ENCODE measurements at regions of chr17 and their contacts with region 1.

Region 1: DNA sequence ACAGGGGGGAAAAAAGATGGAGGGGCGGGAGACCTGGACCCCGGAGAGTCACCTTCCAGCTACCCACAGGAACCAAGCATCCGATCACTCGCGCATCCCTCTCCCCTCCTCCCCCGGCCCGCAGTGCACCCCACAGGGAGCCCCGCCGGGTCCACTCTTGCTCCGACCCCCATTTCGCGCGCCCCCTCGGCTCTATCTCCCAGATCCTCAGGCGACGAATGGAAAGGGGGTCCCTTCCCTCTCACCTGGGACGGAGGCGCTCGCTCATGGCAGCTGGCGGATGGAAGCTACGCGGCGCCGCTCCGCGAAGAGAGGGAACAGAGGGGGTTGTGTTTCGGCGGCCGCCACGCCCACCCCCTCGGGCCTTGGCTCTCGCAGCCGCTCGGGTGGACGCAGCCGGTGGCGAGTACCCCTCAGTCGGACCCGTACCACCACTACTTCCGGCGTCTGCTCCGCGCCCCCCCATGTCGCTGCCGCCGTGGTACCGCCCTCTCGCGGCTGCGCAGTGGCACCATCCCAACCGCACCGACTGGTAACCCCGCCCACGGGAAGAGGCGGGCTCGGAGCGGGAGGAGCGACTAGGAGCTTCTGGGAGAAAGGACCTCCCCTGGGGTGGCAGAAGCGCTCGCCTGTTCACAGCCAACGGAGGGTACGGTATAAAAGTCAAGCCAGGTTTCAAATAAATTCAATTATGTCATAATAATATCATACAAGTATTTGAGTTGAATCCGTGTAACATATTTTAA is 29.7 kb downstream of the CPSF4L start:
- DNase-seq: peak; percentile 96
- ATAC-seq: peak; percentile 85
- H3K4me3 ChIP-seq: peak overlapping the region; percentile 95
- H3K27ac ChIP-seq: peak overlapping the region; percentile 89
- H3K4me1 ChIP-seq: peaks cover 19 to 31% of the 10 kb centered on the region in 2 experiments
- H3K27me3 ChIP-seq: no peaks in the 10 kb centered on the region
- CTCF ChIP-seq: peak; percentile 22 to 36 (median 32); a peak in 3 of 6 replicates
- EP300 ChIP-seq: no peak
- POLR2A ChIP-seq: peak; percentile 79
- RAD21 ChIP-seq: no peak; a peak in 1 of 4 replicates

Region 2: GRCh38 chr17:73210002-73210678 is 21.9 kb before region 1 on chr17:
- CTCF ChIA-PET with region 1: no interaction called
- POLR2A ChIA-PET with region 1: interaction called, 10 read pairs
- in situ Hi-C with region 1: no loop called
- intact Hi-C with region 1: no loop called
- DNase-seq: peak; percentile 58 to 81 (median 71)
- ATAC-seq: peak; percentile 88
- H3K4me3 ChIP-seq: no peak overlapping the region
- H3K27ac ChIP-seq: peak overlapping the region; percentile 51; the same call in 2 of the 3 replicates
- H3K4me1 ChIP-seq: peaks cover 9 to 11% of the 10 kb centered on the region in 2 experiments; a peak in 4 of 5 replicates
- H3K27me3 ChIP-seq: no peaks in the 10 kb centered on the region
- CTCF ChIP-seq: peak; percentile 39 to 64 (median 57); a peak in 5 of 6 replicates
- EP300 ChIP-seq: no peak
- POLR2A ChIP-seq: no peak
- RAD21 ChIP-seq: no peak; a peak in 1 of 4 replicates

Region 3: GRCh38 chr17:73215447-73215846 is 16.6 kb before region 1 on chr17:
- CTCF ChIA-PET with region 1: no interaction called
- POLR2A ChIA-PET with region 1: interaction called, 16 read pairs
- in situ Hi-C with region 1: no loop called
- intact Hi-C with region 1: no loop called
- DNase-seq: no peak
- ATAC-seq: peak; percentile 52; the same call in 2 of the 3 replicates
- H3K4me3 ChIP-seq: no peak overlapping the region
- H3K27ac ChIP-seq: no peak overlapping the region
- H3K4me1 ChIP-seq: peaks cover 4 to 5% of the 10 kb centered on the region in 2 experiments; a peak in 3 of 5 replicates
- H3K27me3 ChIP-seq: no peaks in the 10 kb centered on the region
- CTCF ChIP-seq: 0 out of 6 replicates have a peak, but pooled peaks of 1 of the 3 experiments have one; percentile 20
- EP300 ChIP-seq: no peak
- POLR2A ChIP-seq: no peak
- RAD21 ChIP-seq: no peak

Measured in K562 (cell line).